ENCODE measurements at regions of chr16 and their contacts with region 1.

Region 1: GRCh38 chr16:46789499-46790414 is 41.2 kb downstream of the C16orf87 start:
- DNase-seq: peak; percentile 62 to 81 (median 79)
- ATAC-seq: peak; percentile 99
- H3K4me3 ChIP-seq: peak overlapping the region; percentile 79
- H3K4me3 Mint-ChIP-seq: peak overlapping the region; percentile 77 to 87 (median 84)
- H3K27ac ChIP-seq: peak overlapping the region; percentile 65
- H3K27ac Mint-ChIP-seq: peak overlapping the region; percentile 33 to 92 (median 82)
- H3K4me1 ChIP-seq: peaks cover 0 to 10% of the 10 kb centered on the region in 2 donors
- H3K4me1 Mint-ChIP-seq: peaks cover 5 to 27% (median 24%) of the 10 kb centered on the region in 7 donors
- H3K27me3 ChIP-seq: no peaks in the 10 kb centered on the region
- H3K27me3 Mint-ChIP-seq: peaks cover 0 to 3% (median 0%) of the 10 kb centered on the region in 5 donors

Region 2: DNA sequence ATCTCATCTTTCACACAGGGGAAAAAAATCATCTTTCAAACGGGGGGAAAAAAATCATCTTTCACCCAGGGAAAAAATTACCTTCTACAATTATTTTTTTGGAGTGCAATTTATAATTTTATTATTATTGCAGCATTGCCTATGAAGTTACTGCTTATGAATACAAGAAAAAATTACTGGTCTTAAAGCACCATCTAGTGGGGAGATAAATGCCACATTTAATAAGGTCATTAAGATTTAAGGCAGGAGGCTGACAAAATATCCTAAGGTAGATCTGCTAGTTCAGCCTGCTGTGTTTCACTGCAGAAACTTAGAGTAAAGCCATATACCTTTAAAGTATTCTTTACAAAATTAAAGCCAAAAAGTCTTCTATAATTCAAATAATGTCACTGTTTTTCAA is 182.2 kb before region 1 on chr16:
- CTCF ChIA-PET with region 1: interaction called, 10 read pairs
- POLR2A ChIA-PET with region 1: no interaction called
- intact Hi-C with region 1: no loop called
- DNase-seq: peak in 4 of 9 donors; percentile 22 to 33 (median 26)
- ATAC-seq: no peak
- H3K4me3 ChIP-seq: no peak overlapping the region
- H3K4me3 Mint-ChIP-seq: no peak overlapping the region
- H3K27ac ChIP-seq: no peak overlapping the region
- H3K27ac Mint-ChIP-seq: no peak overlapping the region
- H3K4me1 ChIP-seq: no peaks in the 10 kb centered on the region
- H3K4me1 Mint-ChIP-seq: peaks cover 0 to 3% (median 0%) of the 10 kb centered on the region in 7 donors
- H3K27me3 ChIP-seq: no peaks in the 10 kb centered on the region
- H3K27me3 Mint-ChIP-seq: no peaks in the 10 kb centered on the region

Region 3: DNA sequence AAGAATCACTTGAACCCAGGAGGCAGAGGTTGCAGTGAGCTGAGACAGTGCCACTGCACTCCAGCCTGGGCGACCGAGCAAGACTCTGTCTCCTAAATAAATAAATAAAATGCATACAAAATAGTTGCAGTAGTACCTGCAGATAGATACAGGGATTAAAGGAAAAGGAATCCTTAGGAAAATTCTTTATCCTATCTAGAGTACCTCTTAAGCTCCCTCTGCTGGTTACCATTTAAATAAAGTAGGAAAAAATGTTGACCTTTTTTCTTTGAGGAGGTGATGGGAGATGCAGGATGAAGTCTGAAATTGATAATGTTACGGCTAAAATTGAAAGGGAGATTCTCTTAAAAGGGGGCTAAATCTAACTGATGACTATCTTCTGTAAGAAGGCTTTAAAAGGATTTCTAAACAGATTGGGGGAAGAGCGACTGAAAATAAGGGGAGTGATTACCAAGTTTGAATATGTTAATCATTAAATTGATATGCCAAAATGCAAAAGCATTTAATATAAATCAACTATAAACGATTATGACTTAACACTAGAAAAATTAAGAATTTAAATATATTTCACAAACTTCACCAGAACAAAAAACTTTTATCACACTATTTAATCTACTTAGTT is 11.8 kb after region 1 on chr16:
- CTCF ChIA-PET with region 1: no interaction called
- POLR2A ChIA-PET with region 1: interaction called, 3 read pairs
- intact Hi-C with region 1: loop called in 1 of 2 experiments (anchors 2 kb)
- DNase-seq: no peak
- ATAC-seq: no peak
- H3K4me3 ChIP-seq: no peak overlapping the region
- H3K4me3 Mint-ChIP-seq: peak overlapping the region in 1 of 10 donors; percentile 11
- H3K27ac ChIP-seq: no peak overlapping the region
- H3K27ac Mint-ChIP-seq: peak overlapping the region in 1 of 9 donors; percentile 56
- H3K4me1 ChIP-seq: no peaks in the 10 kb centered on the region
- H3K4me1 Mint-ChIP-seq: peaks cover 3 to 30% (median 23%) of the 10 kb centered on the region in 7 donors
- H3K27me3 ChIP-seq: no peaks in the 10 kb centered on the region
- H3K27me3 Mint-ChIP-seq: no peaks in the 10 kb centered on the region

Region 4: DNA sequence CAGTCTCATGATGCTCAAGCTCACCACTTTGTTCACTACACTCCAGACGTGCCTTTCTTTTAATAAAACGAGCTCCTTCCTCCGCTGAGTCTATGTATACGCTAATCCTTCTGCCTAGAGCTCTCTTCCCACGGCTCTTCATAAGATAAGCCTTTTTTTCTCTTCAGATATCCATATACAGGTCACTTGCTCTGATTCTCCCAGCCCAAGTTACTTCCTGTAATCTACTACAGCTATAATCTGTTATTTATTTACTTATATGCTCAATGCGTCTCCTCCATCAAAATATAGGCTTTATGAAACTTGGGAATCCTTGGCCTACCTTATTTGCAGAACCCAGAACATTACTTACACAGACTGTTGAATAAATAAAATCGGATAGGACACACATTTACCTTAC is 23.9 kb after region 1 on chr16:
- CTCF ChIA-PET with region 1: no interaction called
- POLR2A ChIA-PET with region 1: no interaction called
- intact Hi-C with region 1: loop called in 1 of 2 experiments (anchors 2 kb)
- DNase-seq: no peak
- ATAC-seq: no peak
- H3K4me3 ChIP-seq: no peak overlapping the region
- H3K4me3 Mint-ChIP-seq: no peak overlapping the region
- H3K27ac ChIP-seq: no peak overlapping the region
- H3K27ac Mint-ChIP-seq: peak overlapping the region in 1 of 9 donors; percentile 12
- H3K4me1 ChIP-seq: peaks cover 0 to 5% of the 10 kb centered on the region in 2 donors
- H3K4me1 Mint-ChIP-seq: peaks cover 34 to 64% (median 47%) of the 10 kb centered on the region in 7 donors
- H3K27me3 ChIP-seq: no peaks in the 10 kb centered on the region
- H3K27me3 Mint-ChIP-seq: no peaks in the 10 kb centered on the region